IMR-90 (cell line): ENCODE measurements at regions of chr15 and their contacts with region 1.

Region 1: GRCh38 chr15:34038023-34038870 is 757 bp downstream of the AVEN start:
- DNase-seq: peak; percentile 70
- ATAC-seq: peak; percentile 84
- H3K4me3 ChIP-seq: peak overlapping the region; percentile 76
- H3K27ac ChIP-seq: peak overlapping the region; percentile 92
- H3K4me1 ChIP-seq: peaks cover 2% of the 10 kb centered on the region
- H3K27me3 ChIP-seq: no peaks in the 10 kb centered on the region
- CTCF ChIP-seq: no peak
- POLR2A ChIP-seq: peak; percentile 81
- RAD21 ChIP-seq: no peak

Region 2: DNA sequence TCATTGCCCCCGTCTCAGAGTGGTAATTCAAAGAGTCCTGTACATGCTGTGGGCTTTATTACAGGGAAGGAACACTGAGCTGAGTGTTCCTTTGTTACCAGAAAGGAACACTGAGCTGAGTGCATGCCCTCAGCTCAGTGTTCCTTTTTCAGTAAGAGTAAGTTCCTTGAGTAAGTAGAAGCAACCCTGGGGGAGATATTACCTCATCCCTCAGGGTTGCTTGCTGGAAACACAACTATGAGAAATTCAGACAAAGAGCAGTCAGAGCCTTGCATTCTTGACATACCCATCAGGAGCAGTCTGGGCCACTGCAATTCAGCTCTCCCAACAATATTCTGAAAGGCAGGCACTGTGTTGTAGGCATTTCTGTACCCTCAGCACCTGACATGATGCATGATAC is 53.0 kb before region 1 on chr15:
- CTCF ChIA-PET with region 1: no interaction called
- POLR2A ChIA-PET with region 1: no interaction called
- dilution Hi-C with region 1: no loop called
- in situ Hi-C with region 1: no loop called
- intact Hi-C with region 1: loop called (anchors 5 kb)
- DNase-seq: peak; percentile 90
- ATAC-seq: peak; percentile 92
- H3K4me3 ChIP-seq: no peak overlapping the region
- H3K27ac ChIP-seq: peak overlapping the region; percentile 70
- H3K4me1 ChIP-seq: peaks cover 15% of the 10 kb centered on the region
- H3K27me3 ChIP-seq: no peaks in the 10 kb centered on the region
- CTCF ChIP-seq: no peak
- POLR2A ChIP-seq: no peak
- RAD21 ChIP-seq: no peak

Region 3: DNA sequence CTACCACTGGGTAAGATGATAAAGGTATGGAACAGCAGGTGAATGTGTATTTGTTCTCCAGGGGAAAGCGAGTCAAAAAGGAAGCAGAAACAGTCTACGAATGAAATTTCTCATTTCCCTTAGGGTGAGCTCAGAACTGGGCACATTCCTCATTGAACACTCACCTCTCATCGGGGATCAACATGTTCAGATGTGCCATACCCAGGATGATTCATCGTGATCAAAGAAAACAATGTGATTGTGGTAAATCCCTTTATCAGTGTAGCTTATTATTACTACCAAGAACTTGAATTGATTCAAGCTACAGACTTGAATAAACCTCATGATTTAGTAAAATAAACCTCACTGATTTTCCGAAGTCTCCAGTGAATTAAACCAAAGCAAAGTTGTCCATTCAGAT is 644.4 kb after region 1 on chr15:
- CTCF ChIA-PET with region 1: no interaction called
- POLR2A ChIA-PET with region 1: no interaction called
- dilution Hi-C with region 1: no loop called
- in situ Hi-C with region 1: no loop called
- intact Hi-C with region 1: no loop called
- DNase-seq: peak; percentile 76
- ATAC-seq: no peak
- H3K4me3 ChIP-seq: no peak overlapping the region
- H3K27ac ChIP-seq: no peak overlapping the region
- H3K4me1 ChIP-seq: peaks cover 2% of the 10 kb centered on the region; the same call in 1 of the 2 replicates
- H3K27me3 ChIP-seq: peaks cover 14% of the 10 kb centered on the region
- CTCF ChIP-seq: no peak
- POLR2A ChIP-seq: no peak
- RAD21 ChIP-seq: no peak